MCF 10A (cell line): ENCODE measurements at regions of chr17 and their contacts with region 1.

Region 1: GRCh38 chr17:50931144-50931908 is 65.2 kb upstream of the TOB1 start:
- DNase-seq: peak; percentile 78
- H3K4me3 Mint-ChIP-seq: peak overlapping the region; percentile 71
- H3K27ac Mint-ChIP-seq: peak overlapping the region; percentile 32
- H3K4me1 Mint-ChIP-seq: peaks cover 45% of the 10 kb centered on the region
- H3K27me3 Mint-ChIP-seq: no peaks in the 10 kb centered on the region
- CTCF ChIP-seq: no peak

Region 2: GRCh38 chr17:50893183-50893993 is 37.9 kb before region 1 on chr17:
- CTCF ChIA-PET with region 1: interaction called, 3 read pairs
- POLR2A ChIA-PET with region 1: interaction called, 11 read pairs
- intact Hi-C with region 1: no loop called
- DNase-seq: peak; percentile 35
- H3K4me3 Mint-ChIP-seq: peak overlapping the region; percentile 6
- H3K27ac Mint-ChIP-seq: peak overlapping the region; percentile 84
- H3K4me1 Mint-ChIP-seq: peaks cover 29% of the 10 kb centered on the region
- H3K27me3 Mint-ChIP-seq: no peaks in the 10 kb centered on the region
- CTCF ChIP-seq: no peak

Region 3: GRCh38 chr17:50919321-50920085 is 11.8 kb before region 1 on chr17:
- CTCF ChIA-PET with region 1: no interaction called
- POLR2A ChIA-PET with region 1: interaction called, 4 read pairs
- intact Hi-C with region 1: loop called (anchors 1 kb)
- DNase-seq: peak; percentile 72
- H3K4me3 Mint-ChIP-seq: no peak overlapping the region
- H3K27ac Mint-ChIP-seq: no peak overlapping the region
- H3K4me1 Mint-ChIP-seq: peaks cover 21% of the 10 kb centered on the region
- H3K27me3 Mint-ChIP-seq: no peaks in the 10 kb centered on the region
- CTCF ChIP-seq: no peak

Region 4: DNA sequence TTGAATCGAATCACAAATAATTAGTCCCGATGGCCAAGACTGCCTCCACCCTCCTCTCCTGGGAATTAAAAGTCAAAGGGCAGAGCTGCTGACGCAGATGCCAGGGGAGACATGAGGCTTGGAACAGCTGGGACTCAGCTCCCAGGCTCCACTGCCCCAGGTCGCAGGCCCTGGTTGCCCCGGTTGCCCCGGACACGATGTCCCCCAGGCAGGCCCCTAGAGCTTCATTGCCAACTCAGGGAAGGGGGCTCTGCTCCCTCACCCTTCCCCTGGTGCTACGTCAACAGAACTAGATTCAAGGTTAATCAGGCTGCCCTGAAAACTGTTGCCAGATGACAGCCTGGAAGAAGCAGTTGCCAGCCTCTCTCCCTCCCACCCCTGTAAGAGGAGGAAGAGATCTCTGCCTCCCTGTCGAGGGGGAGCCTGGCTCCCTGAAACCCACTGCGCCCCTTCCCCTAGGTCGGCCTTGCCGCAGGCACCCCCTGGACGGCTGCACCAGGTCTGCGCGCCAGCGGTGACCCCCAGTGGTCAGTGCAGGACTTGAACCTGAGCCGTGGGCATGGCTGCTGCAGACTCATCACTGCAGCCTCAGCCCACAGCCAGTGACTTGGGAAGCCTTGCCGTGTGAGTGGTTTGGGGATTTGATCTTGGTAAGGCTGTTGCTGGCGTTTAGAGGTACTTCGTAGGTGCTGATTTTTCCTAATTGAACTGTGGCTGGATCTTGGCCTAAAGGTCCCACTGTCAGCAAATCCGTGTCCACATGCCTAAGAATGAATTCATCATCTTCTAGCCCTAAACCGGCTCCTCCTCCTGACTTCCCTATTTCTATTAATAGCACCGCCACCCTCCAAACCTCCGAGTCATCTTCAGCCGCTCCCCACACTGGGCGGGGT is 18.9 kb after region 1 on chr17:
- CTCF ChIA-PET with region 1: interaction called, 15 read pairs
- POLR2A ChIA-PET with region 1: interaction called, 81 read pairs
- intact Hi-C with region 1: no loop called
- DNase-seq: peak; percentile 92
- H3K4me3 Mint-ChIP-seq: peak overlapping the region; percentile 42
- H3K27ac Mint-ChIP-seq: peak overlapping the region; percentile 67
- H3K4me1 Mint-ChIP-seq: peaks cover 49% of the 10 kb centered on the region
- H3K27me3 Mint-ChIP-seq: no peaks in the 10 kb centered on the region
- CTCF ChIP-seq: peak; percentile 89

Region 5: GRCh38 chr17:51079049-51079448 is 147.7 kb after region 1 on chr17:
- CTCF ChIA-PET with region 1: no interaction called
- POLR2A ChIA-PET with region 1: no interaction called
- intact Hi-C with region 1: no loop called
- DNase-seq: peak; percentile 53
- H3K4me3 Mint-ChIP-seq: no peak overlapping the region
- H3K27ac Mint-ChIP-seq: no peak overlapping the region
- H3K4me1 Mint-ChIP-seq: peaks cover 7% of the 10 kb centered on the region
- H3K27me3 Mint-ChIP-seq: no peaks in the 10 kb centered on the region
- CTCF ChIP-seq: no peak